ENCODE measurements at regions of chr12 and their contacts with region 1.

Region 1: DNA sequence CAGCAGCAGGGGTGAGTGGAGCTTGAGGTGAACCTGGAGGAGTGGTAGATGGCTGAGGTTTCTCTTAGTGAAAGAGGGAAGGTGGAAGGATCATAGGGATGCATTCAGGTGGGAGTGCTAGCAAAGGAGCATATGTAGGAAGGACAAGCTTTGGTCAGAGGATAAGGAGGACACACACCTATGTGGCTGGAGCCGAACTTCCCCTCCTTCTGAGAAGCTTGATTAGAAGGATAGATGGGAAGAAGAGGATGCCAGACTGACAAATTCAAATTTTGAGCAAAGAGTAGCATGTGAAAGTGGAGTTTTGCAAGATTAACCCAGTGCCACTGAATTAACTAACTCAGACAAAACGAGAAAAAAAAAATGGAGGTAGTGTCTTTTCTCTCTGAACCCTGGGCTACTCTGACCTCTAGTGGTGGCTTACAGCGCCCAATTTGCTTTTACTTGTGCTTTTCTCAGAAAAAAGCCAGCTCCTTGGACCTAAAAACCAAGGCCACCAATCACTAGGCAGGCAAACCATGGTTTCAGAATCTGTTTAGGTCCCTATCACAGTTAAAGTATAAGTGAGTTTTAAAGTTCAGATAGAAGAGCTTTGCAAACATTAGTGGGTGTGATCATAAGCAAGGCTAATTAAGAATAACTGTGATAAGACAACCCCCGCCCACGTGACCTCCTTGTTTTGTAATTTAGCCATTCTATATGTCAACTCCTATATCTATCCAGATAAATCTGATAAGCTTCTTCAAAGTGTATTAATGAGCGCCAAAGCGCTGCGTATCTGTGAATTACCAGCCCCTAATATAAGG is 15.5 kb downstream of the EMP1 start:
- DNase-seq: peak in 1 of 2 experiments; percentile 73
- H3K4me3 ChIP-seq: no peak overlapping the region
- H3K27ac ChIP-seq: no peak overlapping the region
- H3K4me1 ChIP-seq: peaks cover 3 to 10% (median 5%) of the 10 kb centered on the region in 4 experiments; a peak in 4 of 7 replicates
- H3K27me3 ChIP-seq: no peaks in the 10 kb centered on the region
- CTCF ChIP-seq: peak in 2 of 3 experiments; percentile 77 to 78; a peak in 3 of 4 replicates
- EP300 ChIP-seq: no peak
- POLR2A ChIP-seq: no peak
- RAD21 ChIP-seq: peak; percentile 90

Region 2: GRCh38 chr12:12916135-12916944 is 295.7 kb before region 1 on chr12:
- CTCF ChIA-PET with region 1: interaction called, 162 read pairs
- POLR2A ChIA-PET with region 1: interaction called, 4 read pairs
- DNase-seq: peak; percentile 57 to 94
- H3K4me3 ChIP-seq: no peak overlapping the region
- H3K27ac ChIP-seq: no peak overlapping the region
- H3K4me1 ChIP-seq: peaks cover 0 to 6% (median 1%) of the 10 kb centered on the region in 4 experiments; a peak in 4 of 7 replicates
- H3K27me3 ChIP-seq: no peaks in the 10 kb centered on the region; a peak in 1 of 7 replicates
- CTCF ChIP-seq: peak; percentile 93 to 99 (median 94)
- EP300 ChIP-seq: no peak
- POLR2A ChIP-seq: no peak
- RAD21 ChIP-seq: peak; percentile 99

Region 3: DNA sequence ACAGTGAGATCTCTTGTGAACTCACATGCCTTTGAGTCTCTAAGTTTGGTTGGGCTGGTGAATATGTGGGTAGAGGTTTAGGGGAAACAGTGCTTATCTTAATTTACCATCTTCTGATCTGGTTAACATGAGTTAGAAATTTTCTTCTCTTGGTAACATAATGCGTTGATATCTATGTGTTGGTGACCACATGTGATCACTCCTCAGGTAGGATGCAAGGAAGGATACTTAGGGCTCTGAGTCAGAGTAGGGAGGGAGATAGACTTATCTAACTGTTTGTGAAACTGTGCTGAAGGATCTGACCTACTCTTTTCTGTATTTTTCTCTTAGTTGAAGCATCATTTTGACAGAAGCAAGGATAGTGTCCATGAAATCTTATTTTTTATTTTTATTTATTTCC is 144.7 kb before region 1 on chr12:
- CTCF ChIA-PET with region 1: interaction called, 17 read pairs
- POLR2A ChIA-PET with region 1: interaction called, 3 read pairs
- DNase-seq: no peak
- H3K4me3 ChIP-seq: no peak overlapping the region
- H3K27ac ChIP-seq: no peak overlapping the region
- H3K4me1 ChIP-seq: peaks cover 0 to 2% (median 0%) of the 10 kb centered on the region in 4 experiments; a peak in 1 of 7 replicates
- H3K27me3 ChIP-seq: no peaks in the 10 kb centered on the region
- CTCF ChIP-seq: no peak
- EP300 ChIP-seq: no peak
- POLR2A ChIP-seq: no peak
- RAD21 ChIP-seq: no peak

Region 4: DNA sequence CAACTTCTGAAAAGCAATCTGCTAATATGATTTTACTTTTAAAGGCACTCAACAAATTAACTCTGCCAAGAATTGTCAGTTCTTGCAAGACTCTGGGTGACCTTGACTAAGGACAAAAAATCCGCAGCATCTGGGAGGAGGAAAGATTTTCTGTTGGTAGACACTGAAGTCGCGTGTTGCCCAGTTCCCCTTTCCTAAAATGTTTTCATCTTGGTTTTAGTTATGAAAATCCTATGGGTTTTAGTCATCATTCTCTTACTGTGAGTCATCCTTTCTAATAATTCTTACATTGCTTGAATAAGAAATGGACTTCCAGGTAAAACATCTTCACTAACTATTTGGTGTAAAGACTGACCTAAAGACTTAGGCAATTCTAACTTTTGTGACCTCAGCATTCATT is 117.7 kb before region 1 on chr12:
- CTCF ChIA-PET with region 1: interaction called, 63 read pairs
- POLR2A ChIA-PET with region 1: interaction called, 3 read pairs
- DNase-seq: no peak
- H3K4me3 ChIP-seq: no peak overlapping the region
- H3K27ac ChIP-seq: no peak overlapping the region
- H3K4me1 ChIP-seq: peaks cover 2 to 9% (median 8%) of the 10 kb centered on the region in 4 experiments
- H3K27me3 ChIP-seq: no peaks in the 10 kb centered on the region
- CTCF ChIP-seq: no peak
- EP300 ChIP-seq: no peak
- POLR2A ChIP-seq: no peak
- RAD21 ChIP-seq: no peak

Region 5: GRCh38 chr12:13135371-13136178 is 76.5 kb before region 1 on chr12:
- CTCF ChIA-PET with region 1: interaction called, 18 read pairs
- POLR2A ChIA-PET with region 1: no interaction called
- DNase-seq: peak in 1 of 2 experiments; percentile 19
- H3K4me3 ChIP-seq: no peak overlapping the region; a peak in 1 of 8 replicates
- H3K27ac ChIP-seq: no peak overlapping the region
- H3K4me1 ChIP-seq: peaks cover 0 to 8% (median 4%) of the 10 kb centered on the region in 4 experiments; a peak in 3 of 7 replicates
- H3K27me3 ChIP-seq: no peaks in the 10 kb centered on the region
- CTCF ChIP-seq: peak in 2 of 3 experiments; percentile 17; a peak in 3 of 4 replicates
- EP300 ChIP-seq: no peak
- POLR2A ChIP-seq: no peak
- RAD21 ChIP-seq: peak in 1 of 2 experiments; percentile 34; a peak in 1 of 4 replicates

Region 6: DNA sequence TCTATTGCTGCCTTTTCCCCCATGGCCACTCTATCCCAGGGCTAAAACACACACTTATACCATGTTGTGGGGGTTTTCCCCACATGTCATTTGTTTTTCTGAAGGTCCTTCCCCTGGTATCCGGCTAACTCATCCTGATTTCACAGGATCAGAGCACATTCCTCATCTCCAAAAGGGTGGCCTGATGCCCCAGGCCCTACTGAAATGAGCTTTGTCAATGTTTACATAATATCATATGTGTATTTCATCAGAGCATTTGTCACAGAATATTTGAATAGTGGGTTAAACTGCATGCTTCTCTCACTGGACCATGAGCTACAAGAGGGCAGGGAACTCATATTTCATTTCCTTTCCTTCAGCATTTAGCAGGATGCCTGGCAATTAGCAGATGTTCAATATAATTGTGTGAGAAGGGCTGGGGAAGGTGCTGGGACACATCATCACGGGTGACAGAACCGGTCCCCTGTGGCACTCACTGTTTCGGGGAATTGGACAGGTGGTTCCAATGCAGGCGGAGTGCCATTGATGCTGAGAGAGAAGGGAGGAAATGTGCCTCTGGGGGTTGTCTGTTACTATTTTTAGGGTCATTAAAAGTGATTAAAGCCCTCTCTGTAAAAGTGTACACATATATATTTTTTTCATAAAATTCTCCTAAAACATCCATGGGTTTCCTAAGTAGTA is 11.3 kb after region 1 on chr12:
- CTCF ChIA-PET with region 1: interaction called, 35 read pairs
- POLR2A ChIA-PET with region 1: no interaction called
- DNase-seq: no peak
- H3K4me3 ChIP-seq: no peak overlapping the region
- H3K27ac ChIP-seq: no peak overlapping the region
- H3K4me1 ChIP-seq: no peaks in the 10 kb centered on the region
- H3K27me3 ChIP-seq: no peaks in the 10 kb centered on the region
- CTCF ChIP-seq: no peak
- EP300 ChIP-seq: no peak
- POLR2A ChIP-seq: no peak
- RAD21 ChIP-seq: no peak